ENCODE measurements at regions of chr4 and their contacts with region 1.

Region 1: DNA sequence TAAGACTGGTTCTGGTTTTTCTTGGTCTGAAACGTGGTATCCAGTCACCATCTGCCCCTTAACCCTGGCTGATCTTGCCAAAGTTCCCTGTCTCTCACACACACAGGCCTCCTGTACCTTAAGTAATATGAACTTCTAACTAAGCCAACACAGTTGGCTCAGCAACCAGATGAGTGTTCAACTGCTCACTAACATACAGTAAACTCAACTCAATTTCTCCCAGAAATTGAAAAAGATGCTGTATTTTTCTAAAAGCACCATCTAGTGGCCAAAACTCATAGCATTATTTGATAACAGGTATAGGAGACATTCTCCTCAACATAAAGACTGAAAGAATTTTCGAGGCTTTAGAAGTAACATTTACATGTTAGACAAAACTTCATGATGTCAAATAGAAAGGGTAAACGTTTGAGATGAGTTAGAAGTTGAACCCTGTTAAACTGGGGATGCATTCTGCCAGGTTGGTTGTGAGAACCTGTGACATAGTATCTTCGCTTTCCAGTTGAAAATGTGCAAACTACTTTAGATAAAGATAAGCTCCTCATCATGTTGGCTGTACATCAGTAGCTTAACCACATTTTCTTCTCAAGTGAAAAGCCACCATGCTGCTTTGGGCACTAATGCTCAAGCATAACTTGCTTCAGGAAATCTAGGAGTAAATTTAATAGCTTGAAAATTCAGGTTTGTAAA is 31.2 kb downstream of the CCNI start:
- DNase-seq: peak in 7 of 9 donors; percentile 20 to 55 (median 43)
- ATAC-seq: peak; percentile 61
- H3K4me3 ChIP-seq: no peak overlapping the region
- H3K4me3 Mint-ChIP-seq: no peak overlapping the region
- H3K27ac ChIP-seq: no peak overlapping the region
- H3K27ac Mint-ChIP-seq: peak overlapping the region in 8 of 9 donors; percentile 19 to 93 (median 52)
- H3K4me1 ChIP-seq: peaks cover 0 to 8% of the 10 kb centered on the region in 2 donors
- H3K4me1 Mint-ChIP-seq: peaks cover 9 to 34% (median 23%) of the 10 kb centered on the region in 7 donors
- H3K27me3 ChIP-seq: no peaks in the 10 kb centered on the region
- H3K27me3 Mint-ChIP-seq: no peaks in the 10 kb centered on the region

Region 2: GRCh38 chr4:76585897-76586360 is 458.7 kb before region 1 on chr4:
- CTCF ChIA-PET with region 1: no interaction called
- POLR2A ChIA-PET with region 1: no interaction called
- intact Hi-C with region 1: loop called in 1 of 2 experiments (anchors 10 kb)
- DNase-seq: peak in 3 of 9 donors; percentile 1 to 6 (median 6)
- ATAC-seq: peak; percentile 24
- H3K4me3 ChIP-seq: no peak overlapping the region
- H3K4me3 Mint-ChIP-seq: peak overlapping the region; percentile 18 to 74 (median 60)
- H3K27ac ChIP-seq: no peak overlapping the region
- H3K27ac Mint-ChIP-seq: no peak overlapping the region
- H3K4me1 ChIP-seq: no peaks in the 10 kb centered on the region
- H3K4me1 Mint-ChIP-seq: peaks cover 0 to 9% (median 0%) of the 10 kb centered on the region in 7 donors
- H3K27me3 ChIP-seq: peaks cover 0 to 6% of the 10 kb centered on the region in 2 donors
- H3K27me3 Mint-ChIP-seq: peaks cover 63 to 76% (median 68%) of the 10 kb centered on the region in 5 donors

Region 3: GRCh38 chr4:76896731-76897535 is 147.7 kb before region 1 on chr4:
- CTCF ChIA-PET with region 1: no interaction called
- POLR2A ChIA-PET with region 1: interaction called, 3 read pairs
- intact Hi-C with region 1: loop called in 1 of 2 experiments (anchors 2 kb)
- DNase-seq: peak; percentile 16 to 47 (median 29)
- ATAC-seq: peak; percentile 64
- H3K4me3 ChIP-seq: peak overlapping the region; percentile 49
- H3K4me3 Mint-ChIP-seq: peak overlapping the region in 9 of 10 donors; percentile 13 to 78 (median 64)
- H3K27ac ChIP-seq: no peak overlapping the region
- H3K27ac Mint-ChIP-seq: no peak overlapping the region
- H3K4me1 ChIP-seq: peaks cover 0 to 4% of the 10 kb centered on the region in 2 donors
- H3K4me1 Mint-ChIP-seq: peaks cover 5 to 13% (median 10%) of the 10 kb centered on the region in 7 donors
- H3K27me3 ChIP-seq: peaks cover 8 to 12% of the 10 kb centered on the region in 2 donors
- H3K27me3 Mint-ChIP-seq: peaks cover 26 to 63% (median 34%) of the 10 kb centered on the region in 5 donors

Region 4: DNA sequence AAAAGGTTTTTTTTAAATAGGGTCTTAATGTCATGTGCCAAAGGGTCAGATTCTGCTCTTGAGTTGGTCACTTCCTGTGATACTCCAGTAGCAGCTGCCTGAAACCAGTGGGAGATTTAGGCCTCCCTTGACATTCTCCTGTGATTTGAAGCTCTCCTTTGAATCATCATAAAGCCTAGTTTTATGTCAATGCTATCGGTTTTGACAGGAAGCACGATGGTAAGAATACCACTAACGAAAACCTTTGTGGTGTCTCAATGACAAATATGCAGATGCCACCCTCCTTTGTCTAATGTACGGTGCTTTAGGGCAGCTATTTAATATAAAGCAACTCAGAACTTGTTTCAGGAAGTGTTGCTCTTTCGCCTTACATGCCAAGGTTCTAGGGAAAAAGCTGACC is 13.1 kb before region 1 on chr4:
- CTCF ChIA-PET with region 1: interaction called, 7 read pairs
- POLR2A ChIA-PET with region 1: interaction called, 5 read pairs
- intact Hi-C with region 1: loop called in 1 of 2 experiments (anchors 1 kb)
- DNase-seq: peak in 3 of 9 donors; percentile 31 to 47 (median 31)
- ATAC-seq: peak; percentile 82
- H3K4me3 ChIP-seq: no peak overlapping the region
- H3K4me3 Mint-ChIP-seq: peak overlapping the region in 5 of 10 donors; percentile 9 to 50 (median 10)
- H3K27ac ChIP-seq: no peak overlapping the region
- H3K27ac Mint-ChIP-seq: peak overlapping the region in 5 of 9 donors; percentile 23 to 76 (median 41)
- H3K4me1 ChIP-seq: peaks cover 16 to 31% of the 10 kb centered on the region in 2 donors
- H3K4me1 Mint-ChIP-seq: peaks cover 24 to 50% (median 45%) of the 10 kb centered on the region in 7 donors
- H3K27me3 ChIP-seq: no peaks in the 10 kb centered on the region
- H3K27me3 Mint-ChIP-seq: no peaks in the 10 kb centered on the region

Region 5: GRCh38 chr4:77203380-77204197 is 159.0 kb after region 1 on chr4:
- CTCF ChIA-PET with region 1: interaction called, 17 read pairs
- POLR2A ChIA-PET with region 1: interaction called, 4 read pairs
- intact Hi-C with region 1: loop called in 1 of 2 experiments (anchors 1 kb)
- DNase-seq: peak; percentile 23 to 73 (median 61)
- ATAC-seq: peak; percentile 87
- H3K4me3 ChIP-seq: no peak overlapping the region
- H3K4me3 Mint-ChIP-seq: no peak overlapping the region
- H3K27ac ChIP-seq: no peak overlapping the region
- H3K27ac Mint-ChIP-seq: no peak overlapping the region
- H3K4me1 ChIP-seq: no peaks in the 10 kb centered on the region
- H3K4me1 Mint-ChIP-seq: peaks cover 0 to 7% (median 0%) of the 10 kb centered on the region in 7 donors
- H3K27me3 ChIP-seq: no peaks in the 10 kb centered on the region
- H3K27me3 Mint-ChIP-seq: peaks cover 0 to 25% (median 5%) of the 10 kb centered on the region in 5 donors

Measured in naive thymus-derived CD4-positive, alpha-beta T cell (primary cell).